ENCODE measurements at regions of chr10 and their contacts with region 1.

Region 1: GRCh38 chr10:35126530-35127296 is at the start of gene CREM:
- DNase-seq: peak; percentile 99 to 100 (median 100)
- H3K4me3 ChIP-seq: peak within 1 kb of the TSS; percentile 57
- H3K27ac ChIP-seq: peak within 1 kb of the TSS; percentile 99
- H3K4me1 ChIP-seq: peaks cover 5% of the 10 kb centered on the region
- H3K27me3 ChIP-seq: no peaks in the 10 kb centered on the region
- CTCF ChIP-seq: peak; percentile 86 to 93 (median 90)
- EP300 ChIP-seq: peak; percentile 74
- POLR2A ChIP-seq: peak; percentile 96
- total RNA-seq, gene CREM: 24.4 to 87.2 (median 66.3) TPM

Region 2: GRCh38 chr10:34776090-34776690 is 350.5 kb before region 1 on chr10:
- intact Hi-C with region 1: no loop called
- DNase-seq: no peak
- H3K4me3 ChIP-seq: no peak overlapping the region
- H3K27ac ChIP-seq: no peak overlapping the region
- H3K4me1 ChIP-seq: peaks cover 18% of the 10 kb centered on the region
- H3K27me3 ChIP-seq: no peaks in the 10 kb centered on the region
- CTCF ChIP-seq: no peak
- EP300 ChIP-seq: no peak
- POLR2A ChIP-seq: no peak

Region 3: DNA sequence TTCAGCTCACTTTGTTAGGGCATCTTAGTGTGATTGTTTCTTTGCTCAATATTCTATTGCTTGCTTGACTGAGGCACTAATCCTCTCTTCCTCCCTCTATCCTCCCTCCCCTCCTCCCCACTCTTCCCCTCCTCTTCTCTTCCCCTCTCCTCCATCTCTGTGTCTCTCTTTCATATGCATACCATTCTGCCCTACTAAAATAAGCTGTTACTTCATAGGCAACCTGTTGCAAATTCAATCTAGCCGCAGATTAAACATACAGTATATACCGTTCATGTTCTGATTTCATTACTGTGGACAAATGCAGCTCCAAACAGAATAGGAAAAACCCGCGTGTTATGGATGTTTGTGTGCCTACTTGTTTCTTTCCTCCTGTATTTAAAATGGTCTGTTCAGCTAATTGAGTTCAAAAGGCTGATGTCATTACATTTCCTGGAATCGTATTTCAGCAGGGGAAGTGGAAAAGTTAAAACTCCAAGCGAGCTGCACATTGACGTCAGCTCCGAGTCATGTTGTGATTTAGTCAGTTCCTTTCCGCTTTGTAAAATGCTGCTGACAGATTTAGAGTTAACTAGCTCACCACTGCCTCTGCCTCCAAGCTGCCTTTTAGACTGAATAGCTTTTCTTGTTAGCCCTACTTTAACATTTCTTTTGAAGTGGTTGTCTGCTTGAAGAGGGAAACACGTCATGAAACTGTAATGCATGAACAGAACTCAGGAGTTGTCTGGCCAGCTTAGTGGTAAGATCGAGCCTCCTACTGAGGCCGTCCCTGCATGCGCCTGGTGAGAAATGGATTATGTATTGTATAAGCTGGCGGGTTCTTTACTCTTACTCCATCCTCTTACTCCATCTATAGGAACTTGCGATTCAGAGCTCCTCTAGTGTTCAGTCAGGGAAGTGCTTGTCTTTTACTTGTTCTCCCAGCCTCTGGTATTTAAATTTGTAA is 68.9 kb after region 1 on chr10:
- intact Hi-C with region 1: loop called in 1 of 4 experiments (anchors 5 kb)
- DNase-seq: peak; percentile 65 to 86 (median 68)
- H3K4me3 ChIP-seq: peak overlapping the region; percentile 44
- H3K27ac ChIP-seq: peak overlapping the region; percentile 75 to 96
- H3K4me1 ChIP-seq: no peaks in the 10 kb centered on the region
- H3K27me3 ChIP-seq: no peaks in the 10 kb centered on the region
- CTCF ChIP-seq: peak; percentile 53 to 94 (median 93)
- EP300 ChIP-seq: peak; percentile 60
- POLR2A ChIP-seq: peak; percentile 33

Region 4: DNA sequence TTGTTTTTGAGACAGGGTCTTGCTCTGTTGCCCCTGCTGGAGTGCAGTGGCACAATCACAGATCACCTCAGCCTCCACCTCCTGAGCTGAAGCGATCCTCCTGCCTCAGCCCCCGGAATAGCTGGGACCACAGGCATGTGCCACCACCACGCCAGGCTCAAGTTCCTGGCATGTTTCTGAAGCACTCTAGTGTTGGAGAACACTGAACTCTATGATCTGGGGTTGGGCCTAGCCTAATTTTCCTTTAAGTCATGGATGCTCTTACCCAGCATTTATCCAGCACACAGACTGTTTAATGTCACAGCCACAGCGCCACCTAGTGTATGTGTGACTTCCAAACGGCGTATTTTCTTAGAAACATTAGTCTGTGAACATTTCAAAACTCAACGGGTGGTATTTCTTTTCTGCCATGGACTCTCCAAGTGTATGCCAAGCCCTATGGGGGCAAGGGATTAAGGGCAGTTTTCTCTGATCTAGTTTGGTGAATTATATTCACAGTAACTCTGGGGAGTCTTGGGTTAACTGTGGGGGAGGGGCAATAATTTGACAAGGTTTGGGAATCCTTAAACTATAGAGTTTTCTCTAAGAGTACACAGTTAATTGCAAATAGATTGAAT is 91.7 kb after region 1 on chr10:
- intact Hi-C with region 1: loop called in 3 of 4 experiments (anchors 5 kb)
- DNase-seq: peak; percentile 75 to 88 (median 82)
- H3K4me3 ChIP-seq: no peak overlapping the region
- H3K27ac ChIP-seq: no peak overlapping the region
- H3K4me1 ChIP-seq: no peaks in the 10 kb centered on the region
- H3K27me3 ChIP-seq: no peaks in the 10 kb centered on the region
- CTCF ChIP-seq: peak; percentile 67 to 83 (median 73)
- EP300 ChIP-seq: no peak
- POLR2A ChIP-seq: no peak

Region 5: GRCh38 chr10:35635576-35635975 is 508.9 kb after region 1 on chr10:
- intact Hi-C with region 1: loop called in 1 of 4 experiments (anchors 10 kb)
- DNase-seq: peak in 2 of 5 donors; percentile 16 to 48
- H3K4me3 ChIP-seq: no peak overlapping the region
- H3K27ac ChIP-seq: no peak overlapping the region
- H3K4me1 ChIP-seq: peaks cover 7% of the 10 kb centered on the region
- H3K27me3 ChIP-seq: no peaks in the 10 kb centered on the region
- CTCF ChIP-seq: peak; percentile 62 to 83 (median 76)
- EP300 ChIP-seq: no peak
- POLR2A ChIP-seq: no peak

Measured in ovary (tissue), 10 donors.